ENCODE measurements at regions of chr4 and their contacts with region 1.

Region 1: GRCh38 chr4:40897557-40898203 is 147.9 kb downstream of the NSUN7 start:
- DNase-seq: peak; percentile 87
- ATAC-seq: peak; percentile 47

Region 2: DNA sequence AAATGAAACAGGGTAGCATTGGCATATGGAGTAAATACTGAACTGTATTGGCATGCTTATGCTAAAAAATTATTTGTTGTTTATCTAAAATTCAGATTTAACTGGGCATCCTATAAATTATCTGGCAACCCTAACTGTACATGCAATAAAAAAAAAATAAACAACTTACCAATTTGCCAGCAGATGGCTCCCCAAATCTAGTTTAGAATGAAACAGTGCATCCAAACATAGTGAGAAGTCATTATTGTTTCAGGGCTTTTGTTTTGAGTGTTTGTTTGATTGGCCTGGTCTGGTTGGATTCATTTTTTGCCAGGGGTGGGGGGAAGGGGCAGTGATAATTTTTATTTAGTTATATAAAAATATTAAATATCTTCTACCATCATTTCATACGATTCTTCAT is 160.8 kb before region 1 on chr4:
- intact Hi-C with region 1: loop called (anchors 5 kb)
- DNase-seq: no peak
- ATAC-seq: peak; percentile 28

Measured in Right ventricle myocardium inferior (tissue), 1 donor.